ENCODE measurements at regions of chr13 and their contacts with region 1.

Region 1: GRCh38 chr13:40682449-40683240 is 16.2 kb upstream of the FOXO1 start:
- DNase-seq: no peak
- ATAC-seq: no peak
- H3K4me3 Mint-ChIP-seq: no peak overlapping the region
- H3K27ac Mint-ChIP-seq: no peak overlapping the region
- H3K4me1 Mint-ChIP-seq: peaks cover 24% of the 10 kb centered on the region
- H3K27me3 Mint-ChIP-seq: no peaks in the 10 kb centered on the region
- CTCF ChIP-seq: no peak

Region 2: GRCh38 chr13:39684531-39685137 is 998.0 kb before region 1 on chr13:
- CTCF ChIA-PET with region 1: interaction called, 52 read pairs
- POLR2A ChIA-PET with region 1: no interaction called
- intact Hi-C with region 1: loop called (anchors 1 kb)
- DNase-seq: no peak
- ATAC-seq: peak; percentile 28
- H3K4me3 Mint-ChIP-seq: no peak overlapping the region
- H3K27ac Mint-ChIP-seq: no peak overlapping the region
- H3K4me1 Mint-ChIP-seq: peaks cover 14% of the 10 kb centered on the region
- H3K27me3 Mint-ChIP-seq: no peaks in the 10 kb centered on the region
- CTCF ChIP-seq: no peak

Region 3: GRCh38 chr13:39777527-39778061 is 905.1 kb before region 1 on chr13:
- CTCF ChIA-PET with region 1: interaction called, 4 read pairs
- POLR2A ChIA-PET with region 1: no interaction called
- intact Hi-C with region 1: loop called (anchors 5 kb)
- DNase-seq: no peak
- ATAC-seq: peak; percentile 47
- H3K4me3 Mint-ChIP-seq: no peak overlapping the region
- H3K27ac Mint-ChIP-seq: no peak overlapping the region
- H3K4me1 Mint-ChIP-seq: peaks cover 8% of the 10 kb centered on the region
- H3K27me3 Mint-ChIP-seq: no peaks in the 10 kb centered on the region
- CTCF ChIP-seq: no peak

Region 4: DNA sequence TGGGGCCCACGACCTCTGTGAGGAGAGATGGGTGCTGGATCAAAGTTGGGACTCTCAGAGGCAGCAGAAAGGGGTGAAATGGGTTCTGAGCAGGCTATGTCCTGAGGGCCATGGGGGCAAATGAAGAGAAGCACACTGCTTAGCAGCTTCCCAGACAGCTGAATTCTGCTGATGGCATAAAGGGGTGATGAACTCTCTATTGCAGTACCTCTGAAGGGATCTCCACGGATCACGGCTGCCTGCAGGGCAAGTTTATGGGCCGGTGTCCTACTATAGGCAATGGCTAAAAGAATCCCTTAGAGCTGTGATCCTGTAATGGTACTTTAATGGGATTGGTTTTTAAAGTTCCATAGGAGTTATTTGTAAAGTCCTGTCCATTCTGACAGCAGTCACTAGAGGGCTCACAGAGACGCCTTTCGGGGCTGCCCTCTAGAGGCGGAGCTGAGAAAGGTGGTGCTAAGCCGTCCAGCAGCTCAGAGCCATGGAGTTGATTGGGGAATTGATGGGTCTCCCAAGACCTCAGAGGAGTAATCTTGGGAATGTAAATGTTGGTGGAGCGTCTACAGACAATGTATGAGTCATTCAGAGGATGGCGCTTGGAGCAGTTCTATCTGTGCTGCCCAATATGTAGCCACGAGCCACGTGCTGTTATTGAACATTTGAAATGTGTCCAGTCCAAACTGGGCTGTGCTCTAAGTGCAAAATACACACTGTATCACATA is 739.9 kb before region 1 on chr13:
- CTCF ChIA-PET with region 1: interaction called, 125 read pairs
- POLR2A ChIA-PET with region 1: no interaction called
- intact Hi-C with region 1: loop called (anchors 1 kb)
- DNase-seq: peak; percentile 44
- ATAC-seq: peak; percentile 100
- H3K4me3 Mint-ChIP-seq: no peak overlapping the region
- H3K27ac Mint-ChIP-seq: no peak overlapping the region
- H3K4me1 Mint-ChIP-seq: no peaks in the 10 kb centered on the region
- H3K27me3 Mint-ChIP-seq: peaks cover 1% of the 10 kb centered on the region
- CTCF ChIP-seq: peak; percentile 93

Region 5: DNA sequence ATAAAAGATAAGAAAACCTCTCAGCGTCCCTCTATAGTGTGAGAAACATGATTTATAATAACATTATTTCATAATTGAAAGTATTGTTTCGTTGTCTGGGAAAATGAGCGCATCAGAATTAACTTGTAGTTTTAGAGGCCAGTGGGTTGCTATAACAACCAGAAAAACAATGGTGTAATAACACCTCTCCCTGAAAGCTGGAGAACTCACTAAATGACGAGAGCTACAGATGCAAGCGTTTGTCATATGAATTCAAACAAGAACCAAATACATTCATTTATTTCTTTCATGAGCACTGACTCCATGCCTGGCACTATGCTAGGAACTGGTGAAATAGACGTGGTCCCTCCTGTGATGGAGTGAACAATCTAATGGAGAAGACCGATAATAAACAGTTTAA is 495.4 kb after region 1 on chr13:
- CTCF ChIA-PET with region 1: no interaction called
- POLR2A ChIA-PET with region 1: no interaction called
- intact Hi-C with region 1: no loop called
- DNase-seq: no peak
- ATAC-seq: no peak
- H3K4me3 Mint-ChIP-seq: no peak overlapping the region
- H3K27ac Mint-ChIP-seq: no peak overlapping the region
- H3K4me1 Mint-ChIP-seq: no peaks in the 10 kb centered on the region
- H3K27me3 Mint-ChIP-seq: no peaks in the 10 kb centered on the region
- CTCF ChIP-seq: no peak

Region 6: DNA sequence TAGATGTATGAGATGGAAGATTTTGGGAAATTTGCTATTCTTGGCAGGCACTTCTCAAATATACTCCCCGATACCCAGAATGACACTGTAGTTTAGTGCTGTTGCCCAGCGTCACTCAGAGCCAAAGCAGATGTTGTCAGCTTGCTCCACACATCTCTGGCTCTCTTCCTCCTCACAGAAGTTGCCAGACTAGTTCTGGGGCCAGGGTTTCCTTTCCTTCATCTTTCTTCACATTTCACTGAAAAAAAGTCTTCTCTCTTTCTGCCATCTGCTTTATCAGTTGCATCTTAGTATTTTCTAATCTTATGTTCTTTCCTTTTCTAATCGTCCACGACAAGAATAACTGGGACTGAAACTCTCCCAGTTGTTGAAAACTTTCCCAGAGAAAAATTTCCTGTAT is 1026.1 kb after region 1 on chr13:
- CTCF ChIA-PET with region 1: no interaction called
- POLR2A ChIA-PET with region 1: no interaction called
- intact Hi-C with region 1: no loop called
- DNase-seq: no peak
- ATAC-seq: no peak
- H3K4me3 Mint-ChIP-seq: no peak overlapping the region
- H3K27ac Mint-ChIP-seq: no peak overlapping the region
- H3K4me1 Mint-ChIP-seq: no peaks in the 10 kb centered on the region
- H3K27me3 Mint-ChIP-seq: no peaks in the 10 kb centered on the region
- CTCF ChIP-seq: no peak

Measured in activated B cell treated with CpG ODN at 0.5 μM for 24 hours (primary cell).